MCF 10A (cell line): ENCODE measurements at regions of chr14 and their contacts with region 1.

Region 1: GRCh38 chr14:54629635-54630360 is 62.9 kb downstream of the SAMD4A start:
- DNase-seq: no peak
- H3K4me3 Mint-ChIP-seq: no peak overlapping the region
- H3K27ac Mint-ChIP-seq: no peak overlapping the region
- H3K4me1 Mint-ChIP-seq: peaks cover 17% of the 10 kb centered on the region
- H3K27me3 Mint-ChIP-seq: no peaks in the 10 kb centered on the region
- CTCF ChIP-seq: no peak

Region 2: DNA sequence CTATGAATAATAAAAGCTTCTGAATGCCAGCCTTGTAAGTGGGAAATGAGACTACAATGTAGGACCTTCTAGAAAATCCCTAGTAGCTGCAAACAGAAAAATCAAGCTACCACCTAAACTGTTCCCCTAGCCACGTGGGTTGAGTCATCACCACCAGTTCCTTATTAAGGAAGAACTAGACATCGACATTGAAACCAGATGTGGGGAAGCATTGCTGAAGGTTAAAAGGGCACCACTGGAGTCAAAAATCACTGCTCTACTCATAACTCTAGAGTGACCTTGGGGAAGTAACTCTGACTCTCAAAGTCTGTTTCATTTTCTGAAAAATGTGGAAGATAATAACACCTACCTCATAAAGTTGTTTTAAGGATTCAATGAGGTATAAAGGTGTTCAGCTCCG is 179.3 kb before region 1 on chr14:
- CTCF ChIA-PET with region 1: no interaction called
- POLR2A ChIA-PET with region 1: no interaction called
- intact Hi-C with region 1: no loop called
- DNase-seq: peak; percentile 12
- H3K4me3 Mint-ChIP-seq: no peak overlapping the region
- H3K27ac Mint-ChIP-seq: peak overlapping the region; percentile 61
- H3K4me1 Mint-ChIP-seq: peaks cover 20% of the 10 kb centered on the region
- H3K27me3 Mint-ChIP-seq: no peaks in the 10 kb centered on the region
- CTCF ChIP-seq: no peak

Region 3: GRCh38 chr14:54642801-54643697 is 13.3 kb after region 1 on chr14:
- CTCF ChIA-PET with region 1: interaction called, 16 read pairs
- POLR2A ChIA-PET with region 1: interaction called, 5 read pairs
- intact Hi-C with region 1: no loop called
- DNase-seq: peak; percentile 24
- H3K4me3 Mint-ChIP-seq: no peak overlapping the region
- H3K27ac Mint-ChIP-seq: no peak overlapping the region
- H3K4me1 Mint-ChIP-seq: peaks cover 12% of the 10 kb centered on the region
- H3K27me3 Mint-ChIP-seq: no peaks in the 10 kb centered on the region
- CTCF ChIP-seq: no peak